IMR-90 (cell line): ENCODE measurements at regions of chr14 and their contacts with region 1.

Region 1: GRCh38 chr14:68911594-68912227 is 67.4 kb downstream of the ACTN1 start:
- DNase-seq: peak; percentile 75
- ATAC-seq: peak; percentile 84
- H3K4me3 ChIP-seq: no peak overlapping the region
- H3K27ac ChIP-seq: peak overlapping the region; percentile 14; the same call in 1 of the 2 replicates
- H3K4me1 ChIP-seq: peaks cover 13% of the 10 kb centered on the region
- H3K27me3 ChIP-seq: no peaks in the 10 kb centered on the region
- CTCF ChIP-seq: peak; percentile 99
- POLR2A ChIP-seq: no peak
- RAD21 ChIP-seq: peak; percentile 86

Region 2: DNA sequence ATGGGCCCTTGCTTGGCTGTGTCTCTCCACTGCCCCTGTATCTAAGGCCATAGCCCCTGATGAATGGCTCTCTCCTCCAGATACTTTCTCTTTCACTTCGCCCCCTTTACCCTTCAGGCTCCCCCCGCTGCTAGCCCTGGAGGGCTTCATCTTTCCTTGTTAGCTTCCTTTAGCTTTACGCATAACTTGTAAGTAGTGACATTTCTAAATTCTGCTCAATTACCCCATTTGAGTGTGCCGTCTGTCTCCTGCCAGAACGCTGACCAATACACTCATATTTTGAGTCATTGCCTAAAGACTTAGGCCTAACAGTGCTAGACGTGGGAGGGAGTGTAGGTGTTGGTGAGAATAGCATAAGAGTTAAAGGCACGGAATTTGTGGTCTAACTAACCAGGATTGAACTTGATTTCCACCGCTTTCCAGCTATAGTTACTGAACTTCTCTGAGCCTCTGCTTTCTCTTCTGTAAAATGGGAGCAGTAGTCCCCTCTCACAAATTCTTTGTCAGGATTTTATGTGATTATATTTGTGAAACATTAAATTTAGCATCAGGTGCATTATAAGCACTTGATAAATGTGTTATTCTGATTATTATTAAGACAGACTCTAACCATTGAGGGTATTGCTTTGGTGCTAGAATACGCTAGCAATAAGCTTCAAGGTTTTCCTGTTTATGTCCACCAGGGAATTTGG is 248.2 kb before region 1 on chr14:
- CTCF ChIA-PET with region 1: no interaction called
- POLR2A ChIA-PET with region 1: no interaction called
- dilution Hi-C with region 1: no loop called
- in situ Hi-C with region 1: no loop called
- intact Hi-C with region 1: no loop called
- DNase-seq: peak; percentile 91
- ATAC-seq: peak; percentile 38
- H3K4me3 ChIP-seq: peak overlapping the region; percentile 6; the same call in 1 of the 2 replicates
- H3K27ac ChIP-seq: peak overlapping the region; percentile 35; the same call in 1 of the 2 replicates
- H3K4me1 ChIP-seq: peaks cover 40% of the 10 kb centered on the region
- H3K27me3 ChIP-seq: no peaks in the 10 kb centered on the region
- CTCF ChIP-seq: no peak
- POLR2A ChIP-seq: no peak
- RAD21 ChIP-seq: peak; percentile 30

Region 3: GRCh38 chr14:68862954-68863594 is 48.6 kb before region 1 on chr14:
- CTCF ChIA-PET with region 1: no interaction called
- POLR2A ChIA-PET with region 1: no interaction called
- dilution Hi-C with region 1: no loop called
- in situ Hi-C with region 1: no loop called
- intact Hi-C with region 1: loop called (anchors 1 kb)
- DNase-seq: peak; percentile 81
- ATAC-seq: peak; percentile 73
- H3K4me3 ChIP-seq: no peak overlapping the region
- H3K27ac ChIP-seq: no peak overlapping the region
- H3K4me1 ChIP-seq: no peaks in the 10 kb centered on the region
- H3K27me3 ChIP-seq: no peaks in the 10 kb centered on the region
- CTCF ChIP-seq: peak; percentile 85
- POLR2A ChIP-seq: 0 out of 2 replicates have a peak, but pooled peaks have one; percentile 41
- RAD21 ChIP-seq: peak; percentile 75

Region 4: DNA sequence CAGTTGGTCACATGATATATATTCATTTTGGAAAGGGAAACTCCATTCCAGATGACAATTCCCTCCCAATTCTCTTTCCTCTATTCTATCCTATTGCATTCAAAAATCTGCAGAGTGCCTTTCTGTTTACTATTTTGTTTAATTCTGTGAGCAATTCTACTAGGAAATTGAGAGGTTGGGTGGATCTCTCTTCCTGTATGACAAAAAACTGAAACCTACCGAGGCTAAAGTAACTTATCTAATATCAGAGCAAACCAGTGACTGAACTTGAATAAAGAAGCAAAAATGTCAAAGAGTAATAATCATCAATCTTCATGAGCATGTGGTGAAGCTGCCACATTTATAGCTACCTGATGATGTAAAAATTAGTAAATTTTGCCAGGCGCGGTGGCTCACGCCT is 84.0 kb after region 1 on chr14:
- CTCF ChIA-PET with region 1: no interaction called
- POLR2A ChIA-PET with region 1: no interaction called
- dilution Hi-C with region 1: no loop called
- in situ Hi-C with region 1: no loop called
- intact Hi-C with region 1: no loop called
- DNase-seq: no peak
- ATAC-seq: no peak
- H3K4me3 ChIP-seq: no peak overlapping the region
- H3K27ac ChIP-seq: no peak overlapping the region
- H3K4me1 ChIP-seq: no peaks in the 10 kb centered on the region
- H3K27me3 ChIP-seq: no peaks in the 10 kb centered on the region
- CTCF ChIP-seq: no peak
- POLR2A ChIP-seq: no peak
- RAD21 ChIP-seq: no peak

Region 5: GRCh38 chr14:69107407-69108003 is 195.8 kb after region 1 on chr14:
- CTCF ChIA-PET with region 1: interaction called, 3 read pairs
- POLR2A ChIA-PET with region 1: no interaction called
- dilution Hi-C with region 1: no loop called
- in situ Hi-C with region 1: no loop called
- intact Hi-C with region 1: loop called (anchors 1 kb)
- DNase-seq: peak; percentile 71
- ATAC-seq: peak; percentile 67
- H3K4me3 ChIP-seq: no peak overlapping the region
- H3K27ac ChIP-seq: no peak overlapping the region
- H3K4me1 ChIP-seq: 0 out of 2 replicates have a peak, but pooled peaks cover 2% of the 10 kb centered on the region
- H3K27me3 ChIP-seq: no peaks in the 10 kb centered on the region
- CTCF ChIP-seq: peak; percentile 84
- POLR2A ChIP-seq: no peak
- RAD21 ChIP-seq: peak; percentile 94

Region 6: GRCh38 chr14:69363055-69363454 is 451.3 kb after region 1 on chr14:
- CTCF ChIA-PET with region 1: no interaction called
- POLR2A ChIA-PET with region 1: no interaction called
- dilution Hi-C with region 1: no loop called
- in situ Hi-C with region 1: no loop called
- intact Hi-C with region 1: no loop called
- DNase-seq: peak; percentile 33
- ATAC-seq: peak; percentile 99
- H3K4me3 ChIP-seq: no peak overlapping the region
- H3K27ac ChIP-seq: no peak overlapping the region
- H3K4me1 ChIP-seq: no peaks in the 10 kb centered on the region
- H3K27me3 ChIP-seq: peaks cover 2% of the 10 kb centered on the region
- CTCF ChIP-seq: peak; percentile 61
- POLR2A ChIP-seq: no peak
- RAD21 ChIP-seq: peak; percentile 79